Heart left ventricle (tissue), 16 donors: ENCODE measurements at regions of chr11 and their contacts with region 1.

Region 1: GRCh38 chr11:59335001-59335400 is 23.7 kb upstream of the OR5AN1 start:
- DNase-seq: no peak
- ATAC-seq: no peak
- H3K4me3 ChIP-seq: no peak overlapping the region
- H3K27ac ChIP-seq: no peak overlapping the region
- H3K4me1 ChIP-seq: no peaks in the 10 kb centered on the region
- H3K27me3 ChIP-seq: no peaks in the 10 kb centered on the region
- CTCF ChIP-seq: no peak
- POLR2A ChIP-seq: no peak

Region 2: DNA sequence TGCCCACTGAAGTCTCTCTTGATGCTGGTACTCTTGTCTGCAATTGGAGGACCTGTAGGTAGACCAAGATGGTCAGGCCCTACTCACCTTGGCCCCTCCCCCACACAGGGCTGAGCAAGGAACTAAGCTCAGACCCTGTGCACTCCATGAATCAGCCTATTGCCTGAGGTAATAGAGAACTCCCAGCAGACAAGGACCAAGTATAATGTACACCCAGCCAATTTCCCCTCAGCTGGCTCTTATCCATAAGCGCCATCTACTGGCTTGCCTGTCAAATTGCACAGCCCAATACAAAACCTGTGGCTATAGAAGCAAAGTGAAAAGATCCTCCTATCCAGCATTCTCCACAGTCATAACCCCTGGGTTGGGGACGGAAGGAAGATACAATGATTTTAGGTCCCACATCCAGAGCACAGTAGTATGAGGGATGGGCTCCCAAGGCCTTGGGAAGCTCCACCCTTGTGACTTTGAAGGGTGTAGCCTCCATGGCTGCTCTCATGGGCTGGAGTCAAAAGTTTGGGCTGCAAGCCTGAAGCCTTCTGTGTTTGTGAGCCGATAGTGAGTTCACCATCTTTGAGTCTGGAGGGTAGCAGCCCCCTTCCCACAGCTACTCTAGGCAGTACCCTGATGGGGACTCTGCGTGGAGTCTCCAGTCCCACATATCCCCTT is 546.5 kb before region 1 on chr11:
- intact Hi-C with region 1: no loop called
- DNase-seq: peak in 2 of 5 donors; percentile 21 to 29
- ATAC-seq: peak in 3 of 4 donors; percentile 58 to 79 (median 74)
- H3K4me3 ChIP-seq: no peak overlapping the region
- H3K27ac ChIP-seq: no peak overlapping the region
- H3K4me1 ChIP-seq: no peaks in the 10 kb centered on the region
- H3K27me3 ChIP-seq: peaks cover 0 to 10% (median 0%) of the 10 kb centered on the region in 9 donors
- CTCF ChIP-seq: peak; percentile 24 to 71 (median 58)
- POLR2A ChIP-seq: no peak

Region 3: GRCh38 chr11:59158206-59159068 is 176.6 kb before region 1 on chr11:
- intact Hi-C with region 1: no loop called
- DNase-seq: peak in 3 of 5 donors; percentile 25 to 49 (median 36)
- ATAC-seq: peak; percentile 52 to 86 (median 84)
- H3K4me3 ChIP-seq: no peak overlapping the region
- H3K27ac ChIP-seq: no peak overlapping the region
- H3K4me1 ChIP-seq: peaks cover 0 to 4% (median 0%) of the 10 kb centered on the region in 12 donors
- H3K27me3 ChIP-seq: peaks cover 0 to 11% (median 0%) of the 10 kb centered on the region in 9 donors
- CTCF ChIP-seq: peak; percentile 73 to 88 (median 80)
- POLR2A ChIP-seq: no peak

Region 4: DNA sequence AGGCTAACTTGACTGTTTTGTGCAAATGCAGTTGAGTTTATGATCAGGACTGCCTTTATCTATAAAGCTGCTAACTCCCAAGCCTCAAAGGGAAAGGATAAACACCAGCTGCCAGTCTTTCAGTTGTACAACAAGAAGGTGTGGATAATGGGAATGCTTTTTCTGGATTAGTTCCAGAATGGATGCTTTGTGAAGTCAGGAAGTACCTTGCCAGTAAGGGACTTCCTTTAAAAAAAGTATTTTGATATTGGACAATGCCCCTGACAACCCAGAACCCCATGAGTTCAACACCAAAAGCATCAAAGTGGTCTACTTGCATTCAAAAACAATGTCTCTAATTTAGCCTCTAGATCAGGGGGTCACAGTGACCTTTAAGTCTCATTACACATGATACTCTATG is 59.2 kb after region 1 on chr11:
- intact Hi-C with region 1: loop called in 1 of 10 experiments (anchors 10 kb)
- DNase-seq: no peak
- ATAC-seq: no peak
- H3K4me3 ChIP-seq: no peak overlapping the region
- H3K27ac ChIP-seq: no peak overlapping the region
- H3K4me1 ChIP-seq: no peaks in the 10 kb centered on the region
- H3K27me3 ChIP-seq: no peaks in the 10 kb centered on the region
- CTCF ChIP-seq: no peak
- POLR2A ChIP-seq: no peak